Ovary (tissue), 10 donors: ENCODE measurements at regions of chr6 and their contacts with region 1.

Region 1: GRCh38 chr6:163427498-163428254 is 13.2 kb downstream of the QKI start:
- DNase-seq: no peak
- H3K4me3 ChIP-seq: no peak overlapping the region
- H3K27ac ChIP-seq: no peak overlapping the region
- H3K4me1 ChIP-seq: peaks cover 15% of the 10 kb centered on the region
- H3K27me3 ChIP-seq: no peaks in the 10 kb centered on the region
- CTCF ChIP-seq: peak; percentile 12 to 62 (median 27)
- EP300 ChIP-seq: no peak
- POLR2A ChIP-seq: no peak

Region 2: GRCh38 chr6:163956571-163957407 is 529.1 kb after region 1 on chr6:
- intact Hi-C with region 1: loop called in 3 of 4 experiments (anchors 10 kb)
- DNase-seq: peak; percentile 51 to 77 (median 63)
- H3K4me3 ChIP-seq: no peak overlapping the region
- H3K27ac ChIP-seq: no peak overlapping the region
- H3K4me1 ChIP-seq: no peaks in the 10 kb centered on the region
- H3K27me3 ChIP-seq: no peaks in the 10 kb centered on the region
- CTCF ChIP-seq: peak in 1 of 3 donors; percentile 57
- EP300 ChIP-seq: no peak
- POLR2A ChIP-seq: no peak

Region 3: DNA sequence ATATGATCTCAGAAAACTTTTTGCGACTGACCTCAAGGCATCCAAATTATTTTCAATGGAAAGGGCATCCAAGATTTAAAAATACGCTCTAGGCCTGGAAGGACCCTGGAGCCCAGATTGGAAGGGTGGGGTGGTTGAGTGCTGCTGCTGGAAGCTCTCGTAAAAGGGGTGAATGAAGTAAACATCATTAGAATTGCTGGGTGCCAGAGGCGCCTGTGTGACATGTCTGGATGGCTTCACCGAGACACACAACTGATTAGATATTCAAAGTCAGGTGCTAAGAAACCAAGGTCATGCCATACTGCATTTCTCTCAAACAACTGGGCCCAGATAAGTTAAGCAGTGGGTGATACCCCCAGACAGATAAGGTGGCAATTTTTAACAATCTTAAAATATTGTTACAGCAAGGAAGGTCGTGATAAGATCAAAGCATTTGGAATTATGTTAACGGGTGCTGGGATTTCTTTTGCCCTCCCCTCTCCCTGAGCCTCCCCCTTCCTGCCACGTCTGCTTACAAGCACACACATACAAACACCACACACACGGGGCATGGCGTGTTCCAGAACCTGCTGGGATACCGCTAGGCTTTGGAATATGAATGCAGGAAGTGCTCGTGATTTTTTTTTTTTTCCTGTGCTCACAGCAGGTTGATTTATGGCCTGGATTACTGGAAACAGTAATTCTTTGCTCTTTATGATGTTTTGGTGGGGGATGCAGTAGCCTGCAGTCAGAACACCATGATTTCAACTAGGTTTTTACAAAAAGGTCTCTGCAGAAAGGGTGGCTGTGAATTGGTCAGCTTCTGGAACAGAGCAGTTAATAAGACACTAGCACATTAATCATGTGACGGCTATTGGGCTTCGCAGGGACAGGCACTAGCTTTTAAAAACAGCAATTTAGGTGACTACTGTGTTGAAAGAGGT is 538.0 kb after region 1 on chr6:
- intact Hi-C with region 1: loop called in 1 of 4 experiments (anchors 10 kb)
- DNase-seq: no peak
- H3K4me3 ChIP-seq: no peak overlapping the region
- H3K27ac ChIP-seq: no peak overlapping the region
- H3K4me1 ChIP-seq: no peaks in the 10 kb centered on the region
- H3K27me3 ChIP-seq: no peaks in the 10 kb centered on the region
- CTCF ChIP-seq: no peak
- EP300 ChIP-seq: no peak
- POLR2A ChIP-seq: no peak